ENCODE measurements at regions of chr9 and their contacts with region 1.

Region 1: GRCh38 chr9:132575005-132575609 is 7.3 kb upstream of the BARHL1 start:
- DNase-seq: peak; percentile 50 to 58 (median 54)
- H3K4me3 ChIP-seq: no peak overlapping the region
- H3K27ac ChIP-seq: no peak overlapping the region
- H3K4me1 ChIP-seq: no peaks in the 10 kb centered on the region
- H3K27me3 ChIP-seq: peaks cover 6 to 85% (median 25%) of the 10 kb centered on the region in 5 experiments

Region 2: DNA sequence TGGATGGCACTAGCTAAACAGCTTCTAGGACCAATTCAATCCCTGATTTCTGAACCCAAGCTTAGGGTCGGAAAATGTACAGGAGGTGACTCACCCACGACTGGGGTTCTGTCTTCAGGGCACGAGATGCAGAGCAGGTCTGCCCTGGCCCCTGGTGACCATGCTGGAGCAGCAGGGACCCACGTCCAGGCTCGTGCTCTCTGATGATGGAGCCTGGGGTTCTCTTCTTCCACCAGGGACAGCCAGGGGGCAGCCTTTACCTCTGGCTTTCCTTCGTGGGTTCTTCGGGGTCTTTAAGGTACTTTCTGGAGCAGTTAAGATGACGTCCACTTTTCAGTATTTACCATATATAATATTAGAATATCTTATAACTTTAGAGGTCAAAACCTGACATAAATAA is 163.0 kb before region 1 on chr9:
- CTCF ChIA-PET with region 1: interaction called, 21 read pairs
- POLR2A ChIA-PET with region 1: no interaction called
- DNase-seq: peak; percentile 42 to 61 (median 60)
- H3K4me3 ChIP-seq: no peak overlapping the region
- H3K27ac ChIP-seq: no peak overlapping the region
- H3K4me1 ChIP-seq: peaks cover 0 to 27% (median 22%) of the 10 kb centered on the region in 4 experiments
- H3K27me3 ChIP-seq: peaks cover 14 to 75% (median 29%) of the 10 kb centered on the region in 5 experiments

Region 3: DNA sequence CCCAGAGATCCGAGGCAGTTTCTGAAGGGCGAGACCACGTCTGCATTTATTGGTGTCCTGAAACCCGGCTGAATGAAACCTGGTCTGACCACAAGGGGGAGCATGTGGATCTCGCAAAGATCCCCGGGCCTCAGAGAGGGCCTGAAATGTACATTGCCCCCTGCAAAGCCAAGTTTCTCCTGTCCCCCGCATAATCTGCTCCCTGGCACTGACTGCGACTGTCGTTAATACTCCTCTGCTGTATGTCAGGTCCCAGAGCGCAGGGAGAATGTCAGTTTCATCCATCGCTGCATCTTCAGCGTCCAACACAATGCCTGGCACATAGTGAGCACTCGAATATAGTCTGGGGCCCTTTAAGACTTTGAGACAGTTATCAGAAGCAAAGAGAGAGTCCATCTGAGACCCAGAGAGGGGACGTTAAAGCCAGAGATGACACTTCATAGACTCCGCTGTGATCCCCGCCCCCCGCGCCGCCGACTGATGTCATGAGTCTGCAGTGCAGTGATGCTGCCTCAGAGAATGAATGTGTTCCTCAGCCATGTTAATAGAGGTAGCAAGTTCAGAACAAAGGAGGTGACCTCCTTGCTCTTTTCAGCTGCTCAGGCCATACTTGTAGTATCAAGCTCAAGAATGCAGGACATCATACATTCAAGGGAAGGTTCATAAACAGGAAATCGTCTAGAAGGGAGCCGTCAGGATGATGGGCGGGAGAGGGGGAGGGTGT is 67.2 kb before region 1 on chr9:
- CTCF ChIA-PET with region 1: interaction called, 24 read pairs
- POLR2A ChIA-PET with region 1: no interaction called
- DNase-seq: peak; percentile 69 to 85 (median 79)
- H3K4me3 ChIP-seq: no peak overlapping the region
- H3K27ac ChIP-seq: no peak overlapping the region
- H3K4me1 ChIP-seq: peaks cover 0 to 14% (median 13%) of the 10 kb centered on the region in 4 experiments
- H3K27me3 ChIP-seq: peaks cover 0 to 11% (median 7%) of the 10 kb centered on the region in 5 experiments

Region 4: DNA sequence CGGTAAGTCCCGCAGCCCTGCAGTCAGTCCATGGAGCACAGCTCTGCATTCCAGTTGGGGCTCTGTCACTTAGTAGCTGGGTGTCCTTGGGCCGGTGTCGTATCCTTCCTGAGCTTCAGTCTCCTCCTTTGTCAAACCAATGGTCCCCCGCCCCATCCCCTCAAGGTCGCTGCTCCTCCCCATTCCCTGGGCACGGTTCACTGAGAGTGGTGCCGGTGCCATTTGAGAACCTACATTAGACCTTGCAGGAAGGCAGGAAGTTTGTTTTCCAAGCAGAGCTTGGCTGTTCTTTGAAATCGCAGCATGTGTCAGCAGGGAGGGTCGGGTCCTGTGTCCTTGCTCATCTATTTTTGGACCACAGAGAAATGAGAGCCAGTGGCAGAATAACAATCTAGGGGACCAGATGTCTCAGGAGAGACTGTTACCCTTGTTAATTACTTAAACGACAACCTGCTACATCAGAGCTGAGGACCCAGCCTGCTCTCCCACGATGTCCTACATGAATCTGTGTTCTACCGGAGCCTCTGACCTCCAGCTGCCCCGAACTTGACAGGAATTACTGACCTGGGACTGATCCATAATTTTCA is 14.4 kb before region 1 on chr9:
- CTCF ChIA-PET with region 1: interaction called, 18 read pairs
- POLR2A ChIA-PET with region 1: no interaction called
- DNase-seq: no peak
- H3K4me3 ChIP-seq: no peak overlapping the region
- H3K27ac ChIP-seq: no peak overlapping the region
- H3K4me1 ChIP-seq: peaks cover 0 to 3% (median 0%) of the 10 kb centered on the region in 4 experiments
- H3K27me3 ChIP-seq: peaks cover 5 to 69% (median 24%) of the 10 kb centered on the region in 5 experiments

Region 5: DNA sequence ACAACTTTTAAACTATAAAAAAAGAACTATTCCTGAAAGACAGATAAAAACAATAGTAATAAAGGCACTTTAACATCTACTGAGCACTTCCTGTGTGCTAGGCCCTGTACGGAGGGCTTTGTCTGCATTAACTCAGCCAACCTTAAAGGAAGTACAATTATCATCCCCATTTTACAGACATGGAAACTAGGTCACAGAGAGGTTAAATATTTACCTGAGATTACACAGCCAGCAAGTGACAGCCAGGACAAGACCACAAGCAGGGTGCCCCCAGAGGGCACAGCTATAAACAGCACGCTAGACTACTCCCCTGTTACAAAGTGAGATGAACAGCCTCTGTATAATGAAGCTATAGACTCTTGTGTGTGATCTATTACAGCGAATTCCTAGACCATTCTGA is 69.1 kb after region 1 on chr9:
- CTCF ChIA-PET with region 1: no interaction called
- POLR2A ChIA-PET with region 1: no interaction called
- DNase-seq: peak in 2 of 3 donors; percentile 48 to 58
- H3K4me3 ChIP-seq: no peak overlapping the region
- H3K27ac ChIP-seq: no peak overlapping the region
- H3K4me1 ChIP-seq: no peaks in the 10 kb centered on the region
- H3K27me3 ChIP-seq: no peaks in the 10 kb centered on the region

Measured in common myeloid progenitor, CD34-positive (primary cell).